ENCODE measurements at regions of chr1 and their contacts with region 1.

Region 1: GRCh38 chr1:153749408-153750005 is 21.7 kb downstream of the INTS3 start:
- DNase-seq: peak; percentile 81 to 91 (median 89)
- ATAC-seq: peak; percentile 87 to 94 (median 94)
- H3K4me3 ChIP-seq: no peak overlapping the region
- H3K27ac ChIP-seq: peak overlapping the region; percentile 33 to 78 (median 71)
- H3K4me1 ChIP-seq: peaks cover 14 to 62% (median 39%) of the 10 kb centered on the region in 12 donors
- H3K27me3 ChIP-seq: no peaks in the 10 kb centered on the region
- CTCF ChIP-seq: peak; percentile 89 to 98 (median 94)
- POLR2A ChIP-seq: no peak

Region 2: GRCh38 chr1:153202006-153202405 is 547.5 kb before region 1 on chr1:
- intact Hi-C with region 1: no loop called
- DNase-seq: no peak
- ATAC-seq: no peak
- H3K4me3 ChIP-seq: no peak overlapping the region
- H3K27ac ChIP-seq: no peak overlapping the region
- H3K4me1 ChIP-seq: no peaks in the 10 kb centered on the region
- H3K27me3 ChIP-seq: peaks cover 0 to 21% (median 2%) of the 10 kb centered on the region in 9 donors
- CTCF ChIP-seq: no peak
- POLR2A ChIP-seq: no peak

Region 3: DNA sequence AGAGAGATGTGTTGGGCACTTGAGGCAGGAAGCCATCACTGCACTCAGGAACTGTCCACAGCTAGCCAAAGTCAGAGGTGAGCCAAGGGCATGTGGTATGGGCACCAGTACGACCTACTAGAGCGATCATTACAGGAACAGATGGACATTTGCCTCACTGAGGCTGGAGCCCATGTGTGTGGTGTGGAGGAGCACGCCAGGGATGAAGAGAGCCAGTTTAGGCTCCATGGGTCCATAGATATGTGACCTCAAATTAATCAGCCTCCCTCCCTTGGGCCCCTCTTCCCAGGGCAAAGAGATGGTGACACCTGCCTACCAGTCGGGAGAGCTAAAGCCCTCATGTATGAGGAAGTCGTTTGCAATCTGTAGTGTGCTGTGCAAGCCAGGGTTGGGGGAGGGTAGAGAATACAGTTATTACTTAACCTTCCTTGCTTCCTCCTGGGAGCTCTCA is 405.0 kb before region 1 on chr1:
- intact Hi-C with region 1: loop called in 1 of 10 experiments (anchors 10 kb)
- DNase-seq: no peak
- ATAC-seq: peak in 2 of 4 donors; percentile 32 to 35
- H3K4me3 ChIP-seq: no peak overlapping the region
- H3K27ac ChIP-seq: no peak overlapping the region
- H3K4me1 ChIP-seq: peaks cover 0 to 10% (median 0%) of the 10 kb centered on the region in 12 donors
- H3K27me3 ChIP-seq: peaks cover 0 to 29% (median 7%) of the 10 kb centered on the region in 9 donors
- CTCF ChIP-seq: no peak
- POLR2A ChIP-seq: no peak

Region 4: DNA sequence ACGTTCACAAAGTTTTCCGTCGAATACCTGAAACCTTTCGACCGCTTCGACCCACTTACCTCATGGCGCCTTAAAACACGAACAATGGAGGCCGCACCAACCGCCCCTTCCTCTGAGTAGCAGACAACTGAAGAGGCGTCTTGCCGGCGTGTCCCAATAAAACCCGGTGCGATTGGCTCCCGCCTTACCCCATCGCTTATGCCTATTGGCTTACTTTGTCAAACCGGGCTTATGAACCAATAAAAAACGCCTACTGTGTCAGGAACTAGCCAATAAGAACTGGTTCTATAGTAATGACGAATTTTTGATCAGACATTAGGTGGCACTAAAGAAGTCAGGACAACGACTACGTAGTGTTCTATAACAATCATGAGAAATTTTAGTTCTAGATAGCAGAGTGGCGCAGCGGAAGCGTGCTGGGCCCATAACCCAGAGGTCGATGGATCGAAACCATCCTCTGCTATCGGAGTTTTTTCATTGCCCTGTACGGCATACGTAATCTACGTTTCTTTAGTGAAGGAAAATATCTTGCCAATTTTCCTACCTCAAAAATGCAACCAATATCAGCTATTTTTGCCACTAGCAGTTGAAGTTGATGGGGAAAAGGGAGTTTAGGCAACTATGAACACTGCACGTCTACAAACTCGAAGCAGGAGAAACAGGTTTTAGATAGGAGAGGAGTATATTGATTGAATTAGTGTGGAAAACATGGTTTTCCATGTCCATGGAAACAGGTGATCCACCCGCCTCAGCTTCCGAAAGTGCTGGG is 78.5 kb before region 1 on chr1 and contains the start of gene ILF2:
- intact Hi-C with region 1: loop called in 4 of 10 experiments (anchors 2 to 5 kb)
- DNase-seq: peak; percentile 97 to 98 (median 98)
- ATAC-seq: peak; percentile 95 to 98 (median 97)
- H3K4me3 ChIP-seq: peak within 1 kb of the TSS; percentile 49 to 93 (median 82)
- H3K27ac ChIP-seq: peak within 1 kb of the TSS; percentile 6 to 90 (median 80)
- H3K4me1 ChIP-seq: peaks cover 6 to 26% (median 14%) of the 10 kb centered on the region in 12 donors
- H3K27me3 ChIP-seq: no peaks in the 10 kb centered on the region
- CTCF ChIP-seq: peak in 6 of 12 donors; percentile 11 to 53 (median 39)
- POLR2A ChIP-seq: peak; percentile 81 to 91
- total RNA-seq, gene ILF2: 65.0 to 92.3 (median 74.2) TPM

Region 5: DNA sequence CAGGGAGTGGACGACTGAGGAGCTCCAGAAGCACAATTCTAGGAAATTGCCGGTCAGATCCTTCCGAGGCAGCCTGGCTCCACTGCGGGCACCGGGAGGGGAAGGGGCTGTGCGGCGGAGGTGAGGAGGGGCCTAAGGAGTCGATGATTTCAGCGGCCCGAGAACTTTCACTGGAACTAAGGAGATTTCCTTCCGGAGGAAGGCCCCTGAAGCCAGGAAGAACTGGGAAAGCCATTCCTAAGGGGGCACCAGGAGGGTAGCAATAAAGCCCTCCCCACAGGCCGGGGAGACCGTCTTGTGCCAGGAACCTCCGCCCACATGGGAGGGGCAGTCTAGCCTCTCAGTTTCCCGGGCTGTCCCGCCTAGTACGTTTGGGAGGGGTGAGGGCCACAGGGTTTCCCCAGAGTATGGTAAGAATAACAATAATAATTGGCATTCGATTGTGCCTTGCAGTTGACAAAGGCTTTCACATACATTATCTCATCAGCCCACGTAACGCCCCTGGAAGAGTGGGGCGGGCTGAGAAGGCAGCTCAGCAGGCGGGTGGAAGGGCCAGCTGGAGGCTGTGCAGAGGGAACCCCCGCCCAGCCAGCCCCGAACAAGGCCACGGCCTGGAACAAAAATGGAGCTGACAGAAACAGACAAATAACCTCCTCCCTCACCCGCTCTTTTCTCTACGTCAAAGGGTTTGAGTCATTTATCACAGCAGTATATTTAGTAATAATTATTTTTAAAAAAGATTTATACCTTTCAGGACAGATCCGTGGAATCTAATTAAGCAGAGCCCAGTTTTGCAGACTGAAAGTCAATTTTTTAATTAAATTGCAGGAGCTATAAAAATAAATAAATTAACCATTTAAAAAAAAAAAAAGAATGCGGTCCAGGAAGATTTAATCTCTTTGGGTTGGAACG is 51.2 kb before region 1 on chr1:
- intact Hi-C with region 1: loop called in 2 of 10 experiments (anchors 5 kb)
- DNase-seq: peak; percentile 80 to 90 (median 81)
- ATAC-seq: peak; percentile 85 to 92 (median 89)
- H3K4me3 ChIP-seq: peak overlapping the region in 8 of 12 donors; percentile 5 to 37 (median 21)
- H3K27ac ChIP-seq: peak overlapping the region; percentile 83 to 98 (median 90)
- H3K4me1 ChIP-seq: peaks cover 11 to 37% (median 24%) of the 10 kb centered on the region in 12 donors
- H3K27me3 ChIP-seq: no peaks in the 10 kb centered on the region
- CTCF ChIP-seq: no peak
- POLR2A ChIP-seq: peak in 1 of 2 donors; percentile 6

Region 6: DNA sequence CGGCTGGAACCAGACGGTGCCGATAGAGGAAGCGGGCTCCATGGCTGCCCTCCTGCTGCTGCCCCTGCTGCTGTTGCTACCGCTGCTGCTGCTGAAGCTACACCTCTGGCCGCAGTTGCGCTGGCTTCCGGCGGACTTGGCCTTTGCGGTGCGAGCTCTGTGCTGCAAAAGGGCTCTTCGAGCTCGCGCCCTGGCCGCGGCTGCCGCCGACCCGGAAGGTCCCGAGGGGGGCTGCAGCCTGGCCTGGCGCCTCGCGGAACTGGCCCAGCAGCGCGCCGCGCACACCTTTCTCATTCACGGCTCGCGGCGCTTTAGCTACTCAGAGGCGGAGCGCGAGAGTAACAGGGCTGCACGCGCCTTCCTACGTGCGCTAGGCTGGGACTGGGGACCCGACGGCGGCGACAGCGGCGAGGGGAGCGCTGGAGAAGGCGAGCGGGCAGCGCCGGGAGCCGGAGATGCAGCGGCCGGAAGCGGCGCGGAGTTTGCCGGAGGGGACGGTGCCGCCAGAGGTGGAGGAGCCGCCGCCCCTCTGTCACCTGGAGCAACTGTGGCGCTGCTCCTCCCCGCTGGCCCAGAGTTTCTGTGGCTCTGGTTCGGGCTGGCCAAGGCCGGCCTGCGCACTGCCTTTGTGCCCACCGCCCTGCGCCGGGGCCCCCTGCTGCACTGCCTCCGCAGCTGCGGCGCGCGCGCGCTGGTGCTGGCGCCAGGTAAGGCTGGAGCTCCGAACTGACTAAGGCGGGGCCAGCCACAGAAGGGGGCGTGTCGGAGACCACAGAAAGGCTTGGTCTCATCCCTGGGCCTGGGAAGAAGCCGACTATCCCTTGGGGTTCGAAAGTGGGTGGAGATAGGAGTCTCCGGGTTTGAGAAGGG is 26.2 kb after region 1 on chr1:
- intact Hi-C with region 1: loop called in 2 of 10 experiments (anchors 2 kb)
- DNase-seq: peak; percentile 66 to 87 (median 71)
- ATAC-seq: peak in 3 of 4 donors; percentile 6 to 43 (median 37)
- H3K4me3 ChIP-seq: peak overlapping the region; percentile 57 to 91 (median 78)
- H3K27ac ChIP-seq: peak overlapping the region; percentile 74 to 95 (median 85)
- H3K4me1 ChIP-seq: peaks cover 7 to 91% (median 69%) of the 10 kb centered on the region in 12 donors
- H3K27me3 ChIP-seq: no peaks in the 10 kb centered on the region
- CTCF ChIP-seq: peak in 1 of 12 donors; percentile 2
- POLR2A ChIP-seq: no peak

Region 7: GRCh38 chr1:154256686-154257085 is 507.2 kb after region 1 on chr1:
- intact Hi-C with region 1: no loop called
- DNase-seq: no peak
- ATAC-seq: no peak
- H3K4me3 ChIP-seq: no peak overlapping the region
- H3K27ac ChIP-seq: no peak overlapping the region
- H3K4me1 ChIP-seq: no peaks in the 10 kb centered on the region
- H3K27me3 ChIP-seq: no peaks in the 10 kb centered on the region
- CTCF ChIP-seq: no peak
- POLR2A ChIP-seq: no peak